Sciatic nerve (tissue), 2 donors: ENCODE measurements at regions of chr1 and their contacts with region 1.

Region 1: DNA sequence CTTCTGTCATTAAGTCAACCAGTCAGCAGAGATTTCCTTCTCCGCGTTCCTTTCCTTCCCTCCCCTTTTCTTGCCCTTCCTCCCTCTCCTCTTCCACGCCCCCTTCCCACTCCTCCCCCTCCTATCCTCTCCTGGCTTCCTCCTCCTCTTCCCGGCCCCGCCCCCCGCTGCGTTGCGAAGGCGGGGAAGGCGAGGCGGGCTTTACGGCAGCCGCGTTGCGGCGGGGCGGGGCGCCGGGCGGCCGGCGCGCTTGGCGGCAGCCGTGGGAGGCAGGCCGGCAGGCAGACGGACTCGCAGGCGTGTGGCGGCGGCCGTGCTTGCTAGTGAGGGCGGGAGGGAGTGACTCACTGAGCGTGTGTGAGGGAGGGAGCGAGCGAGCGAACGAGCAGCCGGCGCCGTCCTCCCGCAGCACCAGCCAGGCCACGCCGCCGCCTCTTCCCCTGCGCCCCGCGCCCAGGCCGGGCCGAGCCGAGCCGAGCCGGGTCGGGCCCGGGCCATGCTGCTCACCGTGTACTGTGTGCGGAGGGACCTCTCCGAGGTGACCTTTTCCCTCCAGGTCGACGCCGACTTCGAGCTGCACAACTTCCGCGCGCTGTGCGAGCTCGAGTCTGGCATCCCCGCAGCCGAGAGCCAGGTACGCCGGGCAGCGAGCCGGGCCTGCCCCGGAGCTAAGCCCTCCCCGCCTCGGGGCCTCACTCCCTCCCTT is at the start of gene DDI2:
- DNase-seq: peak; percentile 98
- ATAC-seq: peak; percentile 96
- total RNA-seq, gene DDI2: 38.5 TPM

Region 2: DNA sequence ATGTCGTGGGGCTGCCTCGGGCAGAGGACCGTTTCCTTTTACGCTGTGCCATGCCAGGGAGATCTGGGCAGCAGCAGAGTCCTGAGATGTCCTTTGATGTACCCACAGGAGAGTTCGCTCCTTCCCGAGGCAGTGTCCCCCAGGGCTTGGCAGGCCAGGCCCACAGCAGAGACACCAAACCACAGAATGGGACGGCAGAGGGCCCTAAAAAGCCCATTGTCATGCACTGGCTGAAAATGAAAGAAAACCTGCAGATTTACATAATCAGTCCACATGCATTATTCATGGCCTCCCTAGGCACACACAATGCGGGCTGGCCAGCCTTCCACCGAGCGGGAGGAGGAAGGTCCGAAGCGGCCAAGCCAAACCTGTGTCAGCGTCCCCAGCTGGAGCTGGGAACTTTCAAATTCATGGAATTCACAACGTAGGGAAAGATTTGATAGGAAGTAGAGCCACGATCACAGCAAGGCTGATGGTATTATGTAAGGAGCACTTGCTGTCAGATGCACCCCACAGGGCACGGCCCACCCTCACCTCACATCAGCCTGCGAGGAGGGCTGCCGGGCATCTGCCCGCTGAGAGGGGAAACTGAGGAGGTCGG is 232.9 kb before region 1 on chr1:
- intact Hi-C with region 1: no loop called
- DNase-seq: no peak
- ATAC-seq: peak; percentile 44

Region 3: GRCh38 chr1:15684468-15685291 is 67.4 kb after region 1 on chr1:
- intact Hi-C with region 1: loop called (anchors 5 kb)
- DNase-seq: peak; percentile 75
- ATAC-seq: peak; percentile 44

Region 4: GRCh38 chr1:16521288-16521583 is 903.9 kb after region 1 on chr1:
- intact Hi-C with region 1: loop called (anchors 10 kb)
- DNase-seq: no peak
- ATAC-seq: no peak